Activated CD4-positive, alpha-beta T cell treated with anti-CD3 and anti-CD28 coated beads, Interleukin-2, amount 10 ng/mL, durations not matched to agents 24 days and 14 days (primary cell): ENCODE measurements at regions of chr2 and their contacts with region 1.

Region 1: GRCh38 chr2:64653349-64654062 is at the start of gene SERTAD2:
- DNase-seq: peak; percentile 96
- H3K4me3 Mint-ChIP-seq: peak within 1 kb of the TSS; percentile 95
- H3K27ac Mint-ChIP-seq: peak within 1 kb of the TSS; percentile 92
- H3K4me1 Mint-ChIP-seq: peaks cover 65% of the 10 kb centered on the region
- H3K27me3 Mint-ChIP-seq: no peaks in the 10 kb centered on the region
- total RNA-seq, gene SERTAD2: 24.6 and 26.7 TPM in 2 replicates

Region 2: DNA sequence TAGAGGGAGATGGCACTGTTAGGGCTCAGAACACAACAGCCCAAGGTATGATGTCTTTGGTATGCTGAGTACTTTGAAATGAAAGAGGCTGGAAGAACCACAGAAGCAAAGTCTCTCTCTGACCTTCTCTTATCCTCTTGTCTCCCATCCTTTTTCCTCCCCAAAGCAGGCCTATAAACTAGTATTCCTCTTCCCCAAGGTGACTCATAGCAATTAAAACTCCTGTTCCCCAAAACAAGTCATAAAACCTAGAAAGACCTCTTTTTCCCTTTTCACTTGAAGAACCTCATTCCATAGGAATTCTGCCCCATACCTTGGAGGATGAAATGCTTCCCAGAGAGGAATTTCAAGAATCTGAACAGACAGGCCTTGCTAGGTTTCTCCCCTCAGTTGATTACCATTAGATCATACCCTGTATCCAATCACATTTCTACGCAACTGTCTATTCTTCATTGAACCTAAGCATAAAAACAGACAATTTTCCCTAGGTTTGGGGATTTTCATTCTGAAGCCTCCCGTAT is 1039.0 kb before region 1 on chr2:
- intact Hi-C with region 1: no loop called
- DNase-seq: no peak
- H3K4me3 Mint-ChIP-seq: no peak overlapping the region
- H3K27ac Mint-ChIP-seq: no peak overlapping the region
- H3K4me1 Mint-ChIP-seq: no peaks in the 10 kb centered on the region
- H3K27me3 Mint-ChIP-seq: peaks cover 25% of the 10 kb centered on the region

Region 3: DNA sequence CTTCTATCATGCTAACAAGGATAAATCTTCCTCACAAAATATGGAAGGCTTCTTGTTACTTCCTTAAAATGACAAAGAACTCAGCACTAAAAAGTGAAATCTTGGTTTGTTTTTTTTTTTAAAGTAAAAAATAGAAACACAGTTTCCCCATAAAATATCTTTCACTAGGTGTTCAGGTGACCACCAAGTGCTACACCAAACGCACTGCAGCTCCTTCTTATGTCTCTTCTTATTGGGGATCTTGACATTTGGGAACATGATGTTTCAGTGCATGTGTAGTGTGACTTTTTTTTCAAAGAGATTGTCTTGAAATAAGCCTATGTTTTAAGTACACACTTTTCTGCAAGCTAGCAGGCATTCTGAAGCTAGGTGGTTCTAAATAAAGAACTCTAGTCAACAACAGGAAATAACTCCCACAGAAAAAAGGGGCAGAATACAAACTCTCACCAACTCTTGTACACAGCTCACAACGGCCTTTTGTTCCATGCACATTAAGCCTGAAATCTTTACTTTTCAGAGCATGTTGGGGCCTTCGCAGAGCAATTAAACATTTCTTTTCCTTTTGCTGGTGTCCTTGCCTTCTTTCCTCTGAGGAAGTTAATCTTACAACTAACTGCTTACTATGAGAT is 13.4 kb after region 1 on chr2:
- intact Hi-C with region 1: loop called (anchors 1 kb)
- DNase-seq: peak; percentile 71
- H3K4me3 Mint-ChIP-seq: peak overlapping the region; percentile 69
- H3K27ac Mint-ChIP-seq: peak overlapping the region; percentile 92
- H3K4me1 Mint-ChIP-seq: peaks cover 36% of the 10 kb centered on the region
- H3K27me3 Mint-ChIP-seq: no peaks in the 10 kb centered on the region

Region 4: GRCh38 chr2:64675860-64676259 is 22.4 kb after region 1 on chr2:
- intact Hi-C with region 1: loop called (anchors 1 kb)
- DNase-seq: peak; percentile 79
- H3K4me3 Mint-ChIP-seq: no peak overlapping the region
- H3K27ac Mint-ChIP-seq: peak overlapping the region; percentile 71
- H3K4me1 Mint-ChIP-seq: peaks cover 45% of the 10 kb centered on the region
- H3K27me3 Mint-ChIP-seq: no peaks in the 10 kb centered on the region

Region 5: DNA sequence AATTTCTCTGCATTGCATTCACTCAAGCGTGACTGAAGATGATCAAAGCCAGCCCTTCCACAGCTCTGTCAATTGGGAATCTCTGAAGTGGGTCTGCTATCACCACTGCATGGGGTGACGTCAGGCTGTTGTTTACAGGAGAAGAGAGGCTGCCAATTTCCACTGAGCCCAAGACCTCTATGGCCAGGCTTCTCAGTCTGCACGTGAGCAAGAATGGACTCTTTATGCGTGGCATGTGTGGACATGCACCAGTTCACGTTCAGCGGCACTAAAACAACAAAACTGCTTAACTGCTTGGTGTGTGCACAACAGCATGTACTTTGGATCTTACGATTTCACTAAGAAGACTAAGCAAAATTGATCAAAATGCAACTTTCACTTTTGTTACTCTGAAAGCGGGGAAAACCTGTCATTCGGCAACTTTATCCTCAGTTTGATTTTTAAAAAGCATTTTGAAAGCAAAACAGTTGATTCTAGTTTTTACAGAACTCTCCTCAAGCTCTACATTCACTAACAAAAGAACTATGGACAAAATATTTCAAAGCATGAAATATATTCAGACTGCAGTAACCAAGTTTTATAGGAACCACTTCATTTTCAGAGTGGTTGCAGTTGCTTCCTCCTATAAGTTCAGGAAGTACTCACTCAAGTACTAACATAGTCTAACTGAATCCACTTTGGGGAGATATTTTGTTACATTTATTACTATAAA is 77.2 kb after region 1 on chr2:
- intact Hi-C with region 1: loop called (anchors 1 kb)
- DNase-seq: peak; percentile 85
- H3K4me3 Mint-ChIP-seq: peak overlapping the region; percentile 84
- H3K27ac Mint-ChIP-seq: peak overlapping the region; percentile 95
- H3K4me1 Mint-ChIP-seq: peaks cover 55% of the 10 kb centered on the region
- H3K27me3 Mint-ChIP-seq: no peaks in the 10 kb centered on the region